CD14-positive monocyte (primary cell): ENCODE measurements at regions of chr10 and their contacts with region 1.

Region 1: GRCh38 chr10:124741281-124741921 is 2.8 kb downstream of the FAM53B start:
- DNase-seq: peak; percentile 64 to 74 (median 64)
- H3K4me3 ChIP-seq: peak overlapping the region; percentile 1 to 89 (median 5)
- H3K4me3 Mint-ChIP-seq: peak overlapping the region; percentile 99 to 100
- H3K27ac ChIP-seq: peak overlapping the region; percentile 14 to 83
- H3K27ac Mint-ChIP-seq: peak overlapping the region; percentile 86 to 96 (median 92)
- H3K4me1 ChIP-seq: peaks cover 37 to 44% of the 10 kb centered on the region in 2 donors
- H3K4me1 Mint-ChIP-seq: peaks cover 67% of the 10 kb centered on the region
- H3K27me3 ChIP-seq: no peaks in the 10 kb centered on the region
- H3K27me3 Mint-ChIP-seq: peaks cover 2% of the 10 kb centered on the region in 3 donors
- CTCF ChIP-seq: peak; percentile 92

Region 2: DNA sequence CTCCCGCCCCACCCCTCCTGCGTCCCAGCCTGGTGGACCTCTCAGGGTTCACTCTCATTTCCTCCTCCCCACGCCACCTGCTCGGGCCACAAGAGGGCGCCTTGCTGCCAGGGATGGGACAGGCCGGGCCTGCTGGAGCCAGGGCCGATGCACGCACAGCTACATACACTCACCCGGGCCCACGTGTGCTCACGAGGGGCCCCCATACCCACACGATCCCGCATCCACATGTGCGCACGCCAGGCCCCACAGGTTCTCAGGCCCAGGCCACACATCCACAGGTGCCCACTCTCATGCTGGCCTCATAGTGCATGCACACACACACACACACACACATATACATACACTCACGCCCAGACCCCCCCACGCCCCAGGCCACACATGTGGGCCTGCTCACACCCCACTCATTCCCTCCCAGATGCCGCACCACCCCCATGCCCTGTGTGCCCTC is 211.2 kb before region 1 on chr10:
- intact Hi-C with region 1: loop called (anchors 2 kb)
- DNase-seq: peak; percentile 74 to 85 (median 76)
- H3K4me3 ChIP-seq: no peak overlapping the region
- H3K4me3 Mint-ChIP-seq: no peak overlapping the region
- H3K27ac ChIP-seq: no peak overlapping the region
- H3K27ac Mint-ChIP-seq: peak overlapping the region in 1 of 7 donors; percentile 66
- H3K4me1 ChIP-seq: peaks cover 13 to 22% of the 10 kb centered on the region in 2 donors
- H3K4me1 Mint-ChIP-seq: peaks cover 20% of the 10 kb centered on the region
- H3K27me3 ChIP-seq: no peaks in the 10 kb centered on the region
- H3K27me3 Mint-ChIP-seq: peaks cover 2 to 3% (median 3%) of the 10 kb centered on the region in 3 donors
- CTCF ChIP-seq: peak; percentile 83

Region 3: DNA sequence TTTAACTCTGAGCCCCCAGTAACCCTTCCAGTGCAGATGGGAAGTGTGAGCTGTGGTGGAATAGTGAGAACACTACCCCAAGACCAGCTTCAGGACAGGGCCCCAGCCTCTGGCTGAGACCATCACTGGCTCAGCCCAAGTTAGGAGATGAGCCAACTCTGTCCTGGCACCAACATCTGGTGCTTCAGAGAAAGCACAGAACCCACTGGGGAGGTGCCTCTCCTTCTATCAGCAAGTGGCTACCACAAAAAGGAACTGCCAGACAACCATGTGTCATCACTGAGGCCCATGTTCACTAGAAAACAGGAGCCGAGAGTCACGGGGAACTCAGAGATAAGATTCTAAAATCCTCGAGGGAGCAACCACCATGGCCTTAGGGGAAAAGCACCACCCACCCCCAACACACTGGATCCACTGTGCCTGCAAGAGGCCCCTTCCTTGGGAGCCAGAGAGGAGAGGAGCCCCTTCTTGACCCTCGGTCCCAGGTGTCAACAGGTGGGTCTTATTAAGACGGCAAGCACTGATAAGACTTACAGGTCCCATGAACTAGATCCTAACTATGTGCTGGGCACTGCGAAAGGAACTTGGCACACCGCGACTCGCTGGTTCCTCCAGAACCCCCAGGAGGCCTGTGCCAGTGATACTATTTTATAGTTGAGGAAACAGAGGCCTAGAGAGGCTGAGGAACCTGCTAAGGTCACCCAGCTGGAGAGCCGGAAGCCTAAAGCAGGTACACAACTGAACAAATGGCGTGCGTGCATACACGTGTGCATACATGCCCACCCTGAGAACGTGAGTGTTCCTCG is 99.9 kb before region 1 on chr10:
- intact Hi-C with region 1: loop called (anchors 2 to 5 kb)
- DNase-seq: peak; percentile 84 to 91 (median 85)
- H3K4me3 ChIP-seq: peak overlapping the region in 2 of 3 experiments; percentile 2 to 62
- H3K4me3 Mint-ChIP-seq: peak overlapping the region; percentile 66 to 89
- H3K27ac ChIP-seq: peak overlapping the region; percentile 93 to 99
- H3K27ac Mint-ChIP-seq: peak overlapping the region; percentile 96 to 99 (median 98)
- H3K4me1 ChIP-seq: peaks cover 93 to 100% of the 10 kb centered on the region in 2 donors
- H3K4me1 Mint-ChIP-seq: peaks cover 94% of the 10 kb centered on the region
- H3K27me3 ChIP-seq: no peaks in the 10 kb centered on the region
- H3K27me3 Mint-ChIP-seq: peaks cover 0 to 2% (median 0%) of the 10 kb centered on the region in 3 donors
- CTCF ChIP-seq: no peak

Region 4: GRCh38 chr10:124680675-124681074 is 60.7 kb before region 1 on chr10:
- intact Hi-C with region 1: loop called in 1 of 2 experiments (anchors 5 kb)
- DNase-seq: peak; percentile 94 to 97 (median 95)
- H3K4me3 ChIP-seq: peak overlapping the region in 1 of 3 experiments; percentile 26
- H3K4me3 Mint-ChIP-seq: peak overlapping the region in 1 of 2 donors; percentile 63
- H3K27ac ChIP-seq: peak overlapping the region; percentile 99
- H3K27ac Mint-ChIP-seq: peak overlapping the region; percentile 93 to 98 (median 96)
- H3K4me1 ChIP-seq: peaks cover 98 to 99% of the 10 kb centered on the region in 2 donors
- H3K4me1 Mint-ChIP-seq: peaks cover 89% of the 10 kb centered on the region
- H3K27me3 ChIP-seq: no peaks in the 10 kb centered on the region
- H3K27me3 Mint-ChIP-seq: peaks cover 0 to 3% (median 0%) of the 10 kb centered on the region in 3 donors
- CTCF ChIP-seq: no peak

Region 5: DNA sequence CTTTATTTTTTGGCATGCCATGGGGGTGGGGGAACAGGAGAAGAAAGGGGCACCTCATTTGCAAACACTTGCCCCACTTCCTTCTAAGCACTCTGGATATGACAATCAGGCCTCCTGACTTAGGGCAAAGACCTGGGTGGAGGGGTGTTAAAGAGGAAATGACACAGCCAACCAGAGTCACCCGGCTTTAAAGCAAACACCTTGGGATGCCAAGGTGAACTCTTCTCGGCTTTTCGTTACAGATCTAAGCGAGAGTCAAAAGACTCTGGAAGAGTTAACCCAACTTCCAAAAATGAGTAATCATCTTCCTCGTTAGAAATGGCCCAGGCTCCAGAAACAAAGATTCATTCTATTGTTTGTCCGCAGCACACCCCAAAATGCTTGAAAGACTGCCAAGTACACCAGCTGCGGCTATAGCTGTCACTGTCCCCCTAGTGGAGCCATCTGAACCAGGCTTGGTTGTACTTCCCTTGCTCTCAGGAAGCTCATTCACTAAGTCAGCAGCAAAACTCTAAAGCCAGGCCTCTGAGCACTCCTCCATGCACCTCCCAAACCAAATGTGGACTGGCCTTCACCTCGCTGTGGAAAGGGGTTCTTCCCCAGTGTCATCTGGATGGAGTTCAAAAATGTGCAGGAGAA is 22.1 kb before region 1 on chr10:
- intact Hi-C with region 1: loop called (anchors 2 kb)
- DNase-seq: peak; percentile 84 to 86 (median 85)
- H3K4me3 ChIP-seq: peak overlapping the region in 1 of 3 experiments; percentile 35
- H3K4me3 Mint-ChIP-seq: peak overlapping the region; percentile 43 to 67
- H3K27ac ChIP-seq: peak overlapping the region; percentile 97 to 98
- H3K27ac Mint-ChIP-seq: peak overlapping the region; percentile 92 to 99 (median 96)
- H3K4me1 ChIP-seq: peaks cover 76% of the 10 kb centered on the region in 2 donors
- H3K4me1 Mint-ChIP-seq: peaks cover 86% of the 10 kb centered on the region
- H3K27me3 ChIP-seq: no peaks in the 10 kb centered on the region
- H3K27me3 Mint-ChIP-seq: peaks cover 0 to 1% (median 0%) of the 10 kb centered on the region in 3 donors
- CTCF ChIP-seq: peak; percentile 65